Panc1 (cell line): ENCODE measurements at regions of chr10 and their contacts with region 1.

Region 1: GRCh38 chr10:55233505-55233904 is 432.5 kb upstream of the PCDH15 start:
- DNase-seq: no peak
- ATAC-seq: no peak
- H3K4me3 ChIP-seq: no peak overlapping the region
- H3K27ac ChIP-seq: no peak overlapping the region
- H3K4me1 ChIP-seq: peaks cover 4% of the 10 kb centered on the region
- H3K27me3 ChIP-seq: no peaks in the 10 kb centered on the region
- CTCF ChIP-seq: no peak

Region 2: DNA sequence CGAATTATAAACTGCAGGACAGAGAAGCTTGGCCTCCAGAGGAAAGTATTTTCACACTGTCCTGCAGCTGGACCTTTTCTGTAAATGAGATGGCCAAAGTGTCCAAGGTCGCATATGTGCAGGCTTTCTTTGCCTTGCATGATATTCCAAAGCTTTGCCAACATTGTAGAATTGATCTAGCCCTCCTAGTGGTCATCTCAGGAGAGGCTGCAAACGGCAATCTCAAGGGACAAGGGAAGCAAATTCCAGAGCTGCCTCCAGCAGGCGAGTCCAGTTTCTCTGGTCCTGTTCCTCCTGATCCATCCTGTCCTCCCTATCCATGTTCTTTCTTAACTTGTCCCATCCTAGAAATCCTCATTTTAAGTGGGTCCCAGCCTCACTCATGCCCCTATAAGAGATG is 59.1 kb before region 1 on chr10:
- CTCF ChIA-PET with region 1: no interaction called
- POLR2A ChIA-PET with region 1: no interaction called
- in situ Hi-C with region 1: no loop called
- intact Hi-C with region 1: loop called (anchors 10 kb)
- DNase-seq: no peak
- ATAC-seq: no peak
- H3K4me3 ChIP-seq: no peak overlapping the region
- H3K27ac ChIP-seq: no peak overlapping the region
- H3K4me1 ChIP-seq: no peaks in the 10 kb centered on the region
- H3K27me3 ChIP-seq: no peaks in the 10 kb centered on the region
- CTCF ChIP-seq: peak; percentile 38